Common myeloid progenitor, CD34-positive (primary cell): ENCODE measurements at regions of chr9 and their contacts with region 1.

Region 1: DNA sequence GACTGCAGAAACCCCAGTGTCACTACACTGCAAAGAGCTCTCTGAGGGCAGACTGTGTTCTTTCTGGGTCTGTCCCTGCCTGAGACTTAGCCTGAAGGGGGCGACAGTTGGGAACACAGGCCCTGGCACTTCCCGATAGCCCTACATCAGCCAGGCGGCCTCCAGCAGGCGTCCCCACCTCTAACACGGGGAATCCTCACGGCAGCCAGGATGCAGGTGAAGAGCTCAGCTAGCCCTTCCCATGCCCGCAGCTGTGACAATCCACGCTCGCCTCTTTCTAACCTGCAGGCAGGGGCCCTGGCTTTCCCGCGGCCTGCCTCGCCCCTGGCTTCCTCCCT is 5.9 kb downstream of the MED22 start:
- DNase-seq: no peak
- H3K4me3 ChIP-seq: peak overlapping the region in 1 of 7 experiments; percentile 23
- H3K27ac ChIP-seq: peak overlapping the region in 1 of 2 experiments; percentile 65
- H3K4me1 ChIP-seq: peaks cover 3 to 61% (median 57%) of the 10 kb centered on the region in 4 experiments
- H3K27me3 ChIP-seq: no peaks in the 10 kb centered on the region

Region 2: DNA sequence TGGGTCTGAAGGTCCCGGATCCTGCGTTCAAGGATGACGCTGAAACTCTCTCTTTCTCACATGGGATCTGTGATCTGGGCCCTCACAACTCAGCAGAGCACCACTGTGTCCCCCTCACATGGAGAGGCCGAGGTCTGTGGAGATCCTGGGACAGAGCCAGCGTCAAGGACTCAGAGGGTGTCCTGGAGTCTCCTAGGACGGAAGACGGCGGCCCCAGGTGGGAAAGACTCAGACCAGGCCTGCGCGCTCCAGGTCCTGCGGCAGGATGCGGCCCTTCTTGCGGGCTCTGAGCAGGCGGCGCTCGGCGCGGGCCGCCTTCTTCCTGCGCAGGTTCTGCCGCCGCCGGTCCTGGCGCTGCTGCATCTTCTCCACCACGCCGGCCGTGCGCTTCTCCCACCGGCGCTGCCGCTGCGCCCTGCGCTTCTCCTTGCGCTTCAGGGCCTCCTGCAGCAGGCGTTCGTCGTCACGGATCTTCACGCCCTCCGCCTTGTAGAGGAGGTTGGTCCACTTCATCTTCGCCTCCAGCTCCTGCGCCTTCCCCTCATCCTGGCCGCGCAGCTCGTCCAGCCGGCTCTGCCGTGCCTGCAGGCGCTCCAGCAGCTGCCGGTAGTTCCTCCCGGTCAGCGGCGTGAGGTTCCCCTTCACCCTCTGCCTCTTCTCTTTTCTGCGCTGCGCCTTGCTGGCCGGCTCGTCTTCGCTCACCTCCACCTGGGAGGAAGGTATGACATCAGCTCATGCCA is 10.2 kb before region 1 on chr9:
- CTCF ChIA-PET with region 1: interaction called, 12 read pairs
- POLR2A ChIA-PET with region 1: interaction called, 3 read pairs
- DNase-seq: no peak
- H3K4me3 ChIP-seq: no peak overlapping the region
- H3K27ac ChIP-seq: no peak overlapping the region
- H3K4me1 ChIP-seq: peaks cover 4 to 19% (median 19%) of the 10 kb centered on the region in 4 experiments
- H3K27me3 ChIP-seq: no peaks in the 10 kb centered on the region